ENCODE measurements at regions of chr17 and their contacts with region 1.

Region 1: GRCh38 chr17:1716076-1716995 is 6.2 kb upstream of the TLCD2 start:
- DNase-seq: peak; percentile 100
- ATAC-seq: peak; percentile 85
- H3K4me3 Mint-ChIP-seq: peak overlapping the region; percentile 94
- H3K27ac Mint-ChIP-seq: peak overlapping the region; percentile 90
- H3K4me1 Mint-ChIP-seq: peaks cover 23% of the 10 kb centered on the region
- H3K27me3 Mint-ChIP-seq: peaks cover 9% of the 10 kb centered on the region

Region 2: GRCh38 chr17:1684378-1685189 is 31.8 kb before region 1 on chr17 and contains the start of gene PRPF8:
- POLR2A ChIA-PET with region 1: interaction called, 21 read pairs
- DNase-seq: peak; percentile 98
- ATAC-seq: peak; percentile 99
- H3K4me3 Mint-ChIP-seq: peak within 1 kb of the TSS; percentile 89
- H3K27ac Mint-ChIP-seq: peak within 1 kb of the TSS; percentile 89
- H3K4me1 Mint-ChIP-seq: peaks cover 28% of the 10 kb centered on the region
- H3K27me3 Mint-ChIP-seq: no peaks in the 10 kb centered on the region
- total RNA-seq, gene PRPF8: 346 to 350 TPM

Region 3: GRCh38 chr17:1764284-1764683 is 47.9 kb after region 1 on chr17:
- POLR2A ChIA-PET with region 1: interaction called, 12 read pairs
- DNase-seq: peak; percentile 74
- ATAC-seq: peak; percentile 98
- H3K4me3 Mint-ChIP-seq: peak overlapping the region; percentile 43
- H3K27ac Mint-ChIP-seq: peak overlapping the region; percentile 85
- H3K4me1 Mint-ChIP-seq: peaks cover 24% of the 10 kb centered on the region
- H3K27me3 Mint-ChIP-seq: no peaks in the 10 kb centered on the region

Region 4: DNA sequence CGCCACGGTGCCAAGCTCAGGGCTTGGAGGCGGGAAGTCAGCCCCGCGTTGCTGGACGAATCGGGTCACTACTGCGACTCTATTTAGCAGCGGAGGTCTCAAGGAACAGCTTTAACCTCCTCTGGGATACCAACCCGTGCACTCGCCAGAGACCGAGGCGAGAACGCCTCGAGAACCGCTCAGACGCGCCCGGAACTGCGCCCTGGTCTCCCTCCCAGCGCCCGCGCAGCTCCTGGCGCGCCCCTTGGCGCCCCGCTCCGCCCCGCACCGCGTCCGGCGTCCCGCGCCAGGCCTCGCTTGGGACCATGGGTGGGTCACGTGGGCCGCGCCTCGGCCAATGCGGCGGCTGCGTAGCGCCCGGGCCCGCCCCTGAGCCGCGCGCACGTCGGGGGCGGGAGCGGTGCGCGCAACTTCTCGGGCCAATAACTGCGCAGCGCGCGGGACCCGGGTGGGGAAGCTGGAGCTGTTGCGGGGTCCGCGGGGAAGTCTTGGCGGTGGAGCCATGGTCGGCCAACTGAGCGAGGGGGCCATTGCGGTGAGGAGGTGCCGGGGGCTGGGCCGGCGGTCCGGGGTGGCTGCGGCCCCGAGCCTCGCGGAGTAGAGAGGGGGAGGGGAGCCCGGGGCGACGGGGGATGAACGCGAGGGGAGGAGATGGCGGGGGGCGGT is 113.4 kb after region 1 on chr17 and contains the starts of genes RPA1 and SMYD4:
- POLR2A ChIA-PET with region 1: interaction called, 20 read pairs
- DNase-seq: peak; percentile 96
- ATAC-seq: peak; percentile 96
- H3K4me3 Mint-ChIP-seq: peak within 1 kb of the TSS; percentile 92
- H3K27ac Mint-ChIP-seq: peak within 1 kb of the TSS; percentile 92
- H3K4me1 Mint-ChIP-seq: peaks cover 51% of the 10 kb centered on the region
- H3K27me3 Mint-ChIP-seq: no peaks in the 10 kb centered on the region
- total RNA-seq, gene RPA1: 245 to 252 TPM
- total RNA-seq, gene SMYD4: 44.7 to 48.6 TPM

Region 5: GRCh38 chr17:1870592-1870991 is 154.3 kb after region 1 on chr17:
- POLR2A ChIA-PET with region 1: interaction called, 25 read pairs
- DNase-seq: no peak
- ATAC-seq: peak; percentile 68
- H3K4me3 Mint-ChIP-seq: peak overlapping the region; percentile 62
- H3K27ac Mint-ChIP-seq: peak overlapping the region; percentile 90
- H3K4me1 Mint-ChIP-seq: peaks cover 56% of the 10 kb centered on the region
- H3K27me3 Mint-ChIP-seq: no peaks in the 10 kb centered on the region

Measured in activated naive CD8-positive, alpha-beta T cell treated with anti-CD3 and anti-CD28 coated beads, Interleukin-2, amount 10 ng/mL, durations not matched to agents 7 days and 5 days (primary cell).